ENCODE measurements at regions of chr4 and their contacts with region 1.

Region 1: GRCh38 chr4:152079543-152080293 is 318.9 kb upstream of the GATB start:
- DNase-seq: peak; percentile 73
- H3K4me3 Mint-ChIP-seq: peak overlapping the region; percentile 38
- H3K27ac Mint-ChIP-seq: peak overlapping the region; percentile 79
- H3K4me1 Mint-ChIP-seq: peaks cover 66% of the 10 kb centered on the region
- H3K27me3 Mint-ChIP-seq: no peaks in the 10 kb centered on the region

Region 2: DNA sequence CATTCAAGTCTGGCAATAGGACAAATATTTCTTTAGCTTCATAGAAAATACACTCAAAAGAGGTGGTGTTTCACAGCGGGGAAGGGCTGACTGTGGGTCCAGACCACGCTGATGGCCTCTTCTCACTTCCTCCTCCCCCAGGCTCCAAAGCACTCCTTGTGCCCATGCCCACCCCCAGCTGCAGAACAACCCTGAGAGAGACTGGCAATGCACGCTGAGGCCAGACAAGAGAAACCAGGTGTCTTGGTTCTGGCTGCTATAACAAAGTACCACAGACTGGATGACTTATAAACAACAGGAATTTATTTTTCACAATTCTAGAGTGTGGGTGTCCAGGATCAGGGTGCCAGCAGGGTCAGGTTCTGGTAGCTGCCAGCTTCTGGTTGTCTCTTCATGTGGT is 70.0 kb after region 1 on chr4:
- CTCF ChIA-PET with region 1: no interaction called
- intact Hi-C with region 1: loop called (anchors 1 kb)
- DNase-seq: no peak
- H3K4me3 Mint-ChIP-seq: no peak overlapping the region
- H3K27ac Mint-ChIP-seq: no peak overlapping the region
- H3K4me1 Mint-ChIP-seq: peaks cover 4% of the 10 kb centered on the region
- H3K27me3 Mint-ChIP-seq: no peaks in the 10 kb centered on the region

Measured in activated naive CD4-positive, alpha-beta T cell treated with anti-CD3 and anti-CD28 coated beads for 36 hours (primary cell).